Activated naive CD4-positive, alpha-beta T cell treated with anti-CD3 and anti-CD28 coated beads for 36 hours (primary cell): ENCODE measurements at regions of chrX and their contacts with region 1.

Region 1: DNA sequence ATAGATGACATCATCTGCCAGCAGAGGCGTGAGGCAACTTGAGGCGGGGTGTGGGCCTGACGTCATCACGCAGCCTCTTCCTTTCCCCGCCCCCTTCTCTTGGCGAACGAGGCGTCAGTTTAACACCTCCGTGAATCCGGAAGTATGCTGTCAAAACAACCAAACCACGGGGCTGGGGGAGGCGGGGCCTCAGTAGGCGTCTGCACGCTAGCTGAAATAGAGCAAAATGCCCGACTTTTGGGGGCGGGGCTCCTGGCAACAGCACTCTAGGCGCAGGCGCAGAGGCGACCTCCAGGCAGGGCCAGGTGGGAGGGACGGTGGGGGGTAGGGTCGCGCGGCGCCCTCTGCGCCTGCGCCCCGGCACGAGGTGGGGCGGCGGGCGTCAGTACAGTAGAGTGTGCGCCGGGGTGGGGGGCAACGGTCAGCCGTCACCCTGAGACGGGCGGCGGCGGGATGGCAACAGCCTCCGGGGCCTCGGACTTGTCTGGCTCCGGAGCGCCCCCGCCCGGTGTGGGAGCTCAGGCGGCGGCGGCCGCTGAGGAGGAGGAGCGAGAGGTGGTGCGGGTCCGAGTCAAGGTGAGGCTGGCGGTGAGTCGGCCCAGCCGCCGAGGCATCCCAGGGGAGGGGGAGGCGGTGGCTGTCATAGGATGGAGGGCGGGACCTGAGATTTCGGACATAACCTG is at the start of gene TBC1D25:
- DNase-seq: peak; percentile 98
- H3K4me3 Mint-ChIP-seq: peak within 1 kb of the TSS; percentile 88
- H3K27ac Mint-ChIP-seq: peak within 1 kb of the TSS; percentile 93
- H3K4me1 Mint-ChIP-seq: peaks cover 12% of the 10 kb centered on the region
- H3K27me3 Mint-ChIP-seq: no peaks in the 10 kb centered on the region
- total RNA-seq, gene TBC1D25: 10.6 to 11.1 TPM

Region 2: DNA sequence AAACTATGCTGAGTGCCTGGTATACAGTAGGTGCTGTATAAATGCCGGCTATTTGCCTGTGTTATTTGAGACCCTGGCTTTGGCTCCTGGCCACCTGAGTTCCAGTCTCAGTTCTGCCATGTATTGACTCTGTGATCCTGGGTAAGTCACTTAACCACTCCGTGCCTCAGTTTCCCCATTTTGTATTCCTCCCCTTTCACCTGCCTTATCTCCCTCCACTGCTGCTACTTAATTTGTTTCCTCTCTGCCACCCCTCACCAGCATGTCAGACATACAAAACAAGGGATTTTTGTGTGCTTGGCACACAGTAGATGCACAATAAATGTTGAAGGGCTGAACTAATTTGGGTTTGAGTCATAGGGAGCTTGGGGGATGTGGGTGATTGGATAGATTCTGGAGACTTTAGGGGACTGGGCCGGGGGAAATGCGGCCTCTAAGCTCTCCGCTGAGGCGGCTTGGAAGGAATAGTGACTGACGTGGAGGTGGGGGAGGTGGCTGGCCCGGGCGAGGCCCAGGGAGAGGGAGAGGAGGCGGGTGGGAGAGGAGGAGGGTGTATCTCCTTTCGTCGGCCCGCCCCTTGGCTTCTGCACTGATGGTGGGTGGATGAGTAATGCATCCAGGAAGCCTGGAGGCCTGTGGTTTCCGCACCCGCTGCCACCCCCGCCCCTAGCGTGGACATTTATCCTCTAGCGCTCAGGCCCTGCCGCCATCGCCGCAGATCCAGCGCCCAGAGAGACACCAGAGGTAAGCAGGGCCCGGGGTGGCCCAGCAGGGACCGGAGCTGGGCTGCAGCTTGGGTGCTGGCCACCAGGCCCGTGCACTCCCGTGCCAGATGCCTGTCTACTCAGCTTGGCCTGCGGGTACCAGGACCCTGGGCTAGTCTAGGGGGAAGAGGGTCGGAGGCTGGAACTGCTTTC is 957.5 kb before region 1 on chrX and contains the start of gene TIMP1:
- CTCF ChIA-PET with region 1: no interaction called
- intact Hi-C with region 1: no loop called
- DNase-seq: peak; percentile 92
- H3K4me3 Mint-ChIP-seq: peak within 1 kb of the TSS; percentile 64
- H3K27ac Mint-ChIP-seq: peak within 1 kb of the TSS; percentile 43
- H3K4me1 Mint-ChIP-seq: peaks cover 41% of the 10 kb centered on the region
- H3K27me3 Mint-ChIP-seq: no peaks in the 10 kb centered on the region
- total RNA-seq, gene TIMP1: 6.7 to 9.4 TPM

Region 3: GRCh38 chrX:48521353-48522243 is 17.9 kb before region 1 on chrX and contains the start of gene EBP:
- CTCF ChIA-PET with region 1: interaction called, 3 read pairs
- intact Hi-C with region 1: loop called (anchors 1 kb)
- DNase-seq: peak; percentile 98
- H3K4me3 Mint-ChIP-seq: peak within 1 kb of the TSS; percentile 90
- H3K27ac Mint-ChIP-seq: peak within 1 kb of the TSS; percentile 98
- H3K4me1 Mint-ChIP-seq: peaks cover 25% of the 10 kb centered on the region
- H3K27me3 Mint-ChIP-seq: no peaks in the 10 kb centered on the region
- total RNA-seq, gene EBP: 118 to 123 TPM

Region 4: GRCh38 chrX:48720577-48721250 is 181.2 kb after region 1 on chrX:
- CTCF ChIA-PET with region 1: no interaction called
- intact Hi-C with region 1: no loop called
- DNase-seq: no peak
- H3K4me3 Mint-ChIP-seq: no peak overlapping the region
- H3K27ac Mint-ChIP-seq: no peak overlapping the region
- H3K4me1 Mint-ChIP-seq: peaks cover 40% of the 10 kb centered on the region
- H3K27me3 Mint-ChIP-seq: no peaks in the 10 kb centered on the region

Region 5: GRCh38 chrX:48957477-48957826 is 418.0 kb after region 1 on chrX and contains the start of gene OTUD5:
- CTCF ChIA-PET with region 1: no interaction called
- intact Hi-C with region 1: no loop called
- DNase-seq: no peak
- H3K4me3 Mint-ChIP-seq: peak within 1 kb of the TSS; percentile 98
- H3K27ac Mint-ChIP-seq: peak within 1 kb of the TSS; percentile 100
- H3K4me1 Mint-ChIP-seq: peaks cover 53% of the 10 kb centered on the region
- H3K27me3 Mint-ChIP-seq: no peaks in the 10 kb centered on the region
- total RNA-seq, gene OTUD5: 69.1 to 70.5 TPM

Region 6: DNA sequence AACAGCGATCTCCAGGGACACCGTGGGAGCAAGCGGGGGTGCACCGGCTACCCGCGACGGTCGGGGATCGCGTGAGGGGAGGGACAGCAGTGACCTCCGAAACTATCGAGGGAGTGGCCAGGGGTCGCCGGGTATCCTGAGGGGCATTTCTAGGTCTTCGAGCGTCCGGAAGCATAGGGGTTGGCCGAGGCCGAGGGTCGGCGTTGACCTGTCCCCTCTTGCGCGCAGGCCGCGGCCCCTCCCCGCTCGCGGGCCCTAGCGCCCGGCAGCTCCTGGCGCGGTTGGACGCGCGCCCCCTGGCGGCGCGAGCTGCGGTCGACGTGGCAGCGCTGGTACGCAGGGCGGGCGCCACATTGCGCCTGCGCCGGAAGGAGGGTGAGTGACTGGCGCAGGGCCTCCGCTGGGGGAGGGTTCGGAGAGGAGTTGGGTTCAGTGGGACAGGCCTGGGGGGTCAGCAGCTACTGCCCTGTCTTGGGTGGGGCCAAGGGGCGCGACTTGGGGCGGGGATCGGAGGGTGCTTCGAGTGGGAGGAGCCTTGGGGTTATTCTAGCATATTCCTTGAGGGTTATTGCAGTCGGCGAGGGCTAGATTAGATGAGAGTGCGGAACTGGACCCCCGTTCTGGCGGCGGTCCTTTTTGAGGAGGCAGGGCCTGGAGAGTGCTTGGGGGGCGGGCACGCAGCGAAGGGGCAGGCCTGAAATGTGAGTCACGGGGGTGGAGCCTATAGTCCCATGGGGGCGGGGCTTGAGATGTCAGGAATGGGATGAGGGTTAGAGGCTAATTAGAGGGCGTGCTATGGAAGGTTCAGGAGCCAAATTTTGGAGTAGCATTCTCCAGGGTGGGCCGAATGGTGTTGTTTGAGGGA is 624.3 kb after region 1 on chrX:
- CTCF ChIA-PET with region 1: no interaction called
- intact Hi-C with region 1: no loop called
- DNase-seq: peak; percentile 77
- H3K4me3 Mint-ChIP-seq: peak overlapping the region; percentile 76
- H3K27ac Mint-ChIP-seq: peak overlapping the region; percentile 93
- H3K4me1 Mint-ChIP-seq: peaks cover 27% of the 10 kb centered on the region
- H3K27me3 Mint-ChIP-seq: no peaks in the 10 kb centered on the region